Mammary epithelial cell (primary cell): ENCODE measurements at regions of chr5 and their contacts with region 1.

Region 1: GRCh38 chr5:159987031-159987674 is 21.8 kb upstream of the TTC1 start:
- DNase-seq: peak; percentile 76
- H3K4me3 ChIP-seq: peak overlapping the region; percentile 11 to 21 (median 18)
- H3K27ac ChIP-seq: no peak overlapping the region
- H3K4me1 ChIP-seq: peaks cover 29% of the 10 kb centered on the region
- H3K27me3 ChIP-seq: no peaks in the 10 kb centered on the region
- CTCF ChIP-seq: peak; percentile 81 to 89

Region 2: DNA sequence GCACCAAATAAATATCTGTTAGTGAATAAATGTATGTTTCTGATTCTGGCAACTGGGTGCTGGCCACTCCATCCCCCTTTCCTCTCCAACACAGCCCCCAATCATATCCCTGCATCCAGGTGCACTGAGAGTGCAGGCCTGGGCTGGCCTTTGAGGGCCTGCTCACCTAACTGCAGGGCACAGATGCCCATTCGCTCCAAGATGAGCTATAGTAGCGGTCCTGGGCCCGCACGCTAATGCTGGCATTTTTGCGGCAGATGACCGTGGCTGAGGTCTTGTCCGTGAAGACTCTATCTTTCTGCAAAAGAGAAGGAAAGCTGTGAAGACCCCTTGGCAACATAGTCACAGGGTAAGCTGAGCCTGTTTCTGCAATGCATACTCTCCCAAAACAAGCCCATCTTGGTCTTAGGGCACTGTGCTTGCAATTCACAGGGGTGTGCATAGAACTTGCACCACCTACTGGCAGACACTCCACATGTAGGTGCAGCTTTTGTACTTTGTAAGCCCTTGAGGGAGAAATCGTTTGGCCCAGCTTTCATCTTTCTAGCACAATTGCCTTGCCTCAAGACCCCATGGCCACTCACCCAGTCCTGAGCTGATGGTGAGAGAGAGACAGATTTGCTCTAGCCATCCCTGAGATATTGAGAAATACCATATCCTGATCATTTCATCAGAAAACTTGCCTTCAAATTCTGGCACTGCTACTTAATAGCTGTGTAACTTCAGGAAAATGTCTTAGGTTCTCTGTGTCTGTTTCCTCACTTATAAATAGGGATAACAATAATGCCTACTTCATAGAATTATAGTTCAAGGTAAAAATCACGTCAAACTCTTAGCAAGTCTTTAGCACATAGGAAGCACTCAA is 670.4 kb before region 1 on chr5:
- CTCF ChIA-PET with region 1: no interaction called
- dilution Hi-C with region 1: no loop called
- in situ Hi-C with region 1: loop called in 1 of 2 experiments (anchors 25 kb)
- intact Hi-C with region 1: no loop called
- DNase-seq: peak; percentile 39
- H3K4me3 ChIP-seq: no peak overlapping the region
- H3K27ac ChIP-seq: no peak overlapping the region
- H3K4me1 ChIP-seq: no peaks in the 10 kb centered on the region
- H3K27me3 ChIP-seq: no peaks in the 10 kb centered on the region
- CTCF ChIP-seq: peak; percentile 90 to 91

Region 3: GRCh38 chr5:159515909-159516415 is 471.2 kb before region 1 on chr5:
- CTCF ChIA-PET with region 1: no interaction called
- dilution Hi-C with region 1: no loop called
- in situ Hi-C with region 1: loop called in 1 of 2 experiments (anchors 25 kb)
- intact Hi-C with region 1: loop called (anchors 1 kb)
- DNase-seq: peak; percentile 54
- H3K4me3 ChIP-seq: no peak overlapping the region
- H3K27ac ChIP-seq: no peak overlapping the region
- H3K4me1 ChIP-seq: peaks cover 14% of the 10 kb centered on the region
- H3K27me3 ChIP-seq: no peaks in the 10 kb centered on the region
- CTCF ChIP-seq: peak; percentile 95 to 98

Region 4: GRCh38 chr5:159695741-159696294 is 291.3 kb before region 1 on chr5:
- CTCF ChIA-PET with region 1: no interaction called
- dilution Hi-C with region 1: no loop called
- in situ Hi-C with region 1: no loop called
- intact Hi-C with region 1: loop called (anchors 10 kb)
- DNase-seq: no peak
- H3K4me3 ChIP-seq: no peak overlapping the region
- H3K27ac ChIP-seq: no peak overlapping the region
- H3K4me1 ChIP-seq: no peaks in the 10 kb centered on the region
- H3K27me3 ChIP-seq: no peaks in the 10 kb centered on the region
- CTCF ChIP-seq: no peak

Region 5: GRCh38 chr5:159905496-159905895 is 81.7 kb before region 1 on chr5:
- CTCF ChIA-PET with region 1: no interaction called
- dilution Hi-C with region 1: no loop called
- in situ Hi-C with region 1: no loop called
- intact Hi-C with region 1: loop called (anchors 1 kb)
- DNase-seq: peak; percentile 100
- H3K4me3 ChIP-seq: no peak overlapping the region
- H3K27ac ChIP-seq: peak overlapping the region; percentile 90
- H3K4me1 ChIP-seq: peaks cover 65% of the 10 kb centered on the region
- H3K27me3 ChIP-seq: no peaks in the 10 kb centered on the region
- CTCF ChIP-seq: no peak

Region 6: DNA sequence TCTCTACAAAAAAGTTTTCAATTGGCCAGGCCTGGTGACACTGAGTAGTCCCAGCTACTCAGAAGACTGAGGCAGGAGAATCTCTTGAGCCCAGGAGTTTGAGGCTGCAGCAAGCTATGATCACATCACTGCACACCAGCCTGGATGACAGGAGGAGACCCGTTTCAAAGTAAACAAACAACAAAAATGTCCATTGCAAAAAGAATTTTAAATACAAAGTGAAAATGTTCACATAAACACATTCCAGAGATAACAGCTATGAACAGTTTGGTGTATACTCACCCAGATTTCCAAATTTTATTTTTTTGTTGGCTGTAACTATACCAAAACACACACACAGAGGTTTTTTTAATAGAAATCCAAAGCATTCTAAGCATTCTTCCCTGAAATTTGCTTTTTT is 31.1 kb before region 1 on chr5:
- CTCF ChIA-PET with region 1: no interaction called
- dilution Hi-C with region 1: no loop called
- in situ Hi-C with region 1: no loop called
- intact Hi-C with region 1: no loop called
- DNase-seq: no peak
- H3K4me3 ChIP-seq: no peak overlapping the region
- H3K27ac ChIP-seq: no peak overlapping the region
- H3K4me1 ChIP-seq: no peaks in the 10 kb centered on the region
- H3K27me3 ChIP-seq: no peaks in the 10 kb centered on the region
- CTCF ChIP-seq: no peak